Activated B cell treated with CpG ODN at 0.5 μM for 24 hours (primary cell): ENCODE measurements at regions of chr18 and their contacts with region 1.

Region 1: DNA sequence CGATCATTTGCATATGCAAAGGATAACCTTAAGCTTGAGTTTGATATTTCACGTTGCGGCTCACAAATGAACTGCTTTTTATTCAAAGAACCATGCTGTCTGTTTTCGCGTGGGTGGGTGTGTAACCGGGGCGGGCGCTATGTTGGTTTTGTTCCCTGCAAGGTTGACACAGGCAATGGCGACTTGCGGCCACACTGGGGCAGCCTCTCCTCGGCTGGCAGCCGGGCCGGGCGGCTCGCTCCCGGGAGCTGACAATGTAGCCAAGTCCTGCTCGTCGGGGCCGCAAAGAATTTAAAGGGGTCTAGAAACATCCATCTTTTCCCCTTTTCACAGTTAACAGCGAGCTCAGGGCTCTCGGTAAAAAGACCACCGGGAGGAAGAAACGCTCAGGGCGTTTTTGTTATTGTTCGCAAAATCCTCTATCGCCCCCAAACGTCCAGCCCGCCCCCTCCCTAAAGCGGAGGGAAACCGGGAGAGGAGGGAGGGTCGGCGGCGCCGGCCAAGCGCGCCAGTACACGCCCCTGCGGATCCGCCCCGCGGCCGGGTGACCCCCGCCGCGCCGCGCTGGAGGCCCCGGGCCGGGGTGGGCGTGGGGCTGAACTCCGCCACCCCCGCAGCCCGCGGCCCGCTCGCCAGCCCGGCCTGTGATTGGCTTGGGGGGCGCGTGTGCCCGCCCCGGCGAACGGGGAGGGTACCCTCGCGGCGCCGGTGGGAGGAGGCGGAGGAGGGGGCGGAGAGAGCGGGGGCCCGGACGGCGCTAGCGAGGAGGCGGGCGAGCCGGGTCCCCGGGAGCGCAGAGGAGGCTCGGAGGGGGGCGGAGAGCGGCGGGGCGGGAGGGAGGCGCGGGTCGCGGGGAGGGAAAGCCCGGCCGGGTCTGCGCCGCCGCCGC is at the start of gene NEDD4L:
- DNase-seq: peak; percentile 83
- ATAC-seq: peak; percentile 85
- H3K4me3 Mint-ChIP-seq: peak within 1 kb of the TSS; percentile 93
- H3K27ac Mint-ChIP-seq: peak within 1 kb of the TSS; percentile 82
- H3K4me1 Mint-ChIP-seq: peaks cover 41% of the 10 kb centered on the region
- H3K27me3 Mint-ChIP-seq: no peaks in the 10 kb centered on the region
- CTCF ChIP-seq: no peak
- total RNA-seq, gene NEDD4L: 24.9 and 32.6 TPM in 2 replicates

Region 2: DNA sequence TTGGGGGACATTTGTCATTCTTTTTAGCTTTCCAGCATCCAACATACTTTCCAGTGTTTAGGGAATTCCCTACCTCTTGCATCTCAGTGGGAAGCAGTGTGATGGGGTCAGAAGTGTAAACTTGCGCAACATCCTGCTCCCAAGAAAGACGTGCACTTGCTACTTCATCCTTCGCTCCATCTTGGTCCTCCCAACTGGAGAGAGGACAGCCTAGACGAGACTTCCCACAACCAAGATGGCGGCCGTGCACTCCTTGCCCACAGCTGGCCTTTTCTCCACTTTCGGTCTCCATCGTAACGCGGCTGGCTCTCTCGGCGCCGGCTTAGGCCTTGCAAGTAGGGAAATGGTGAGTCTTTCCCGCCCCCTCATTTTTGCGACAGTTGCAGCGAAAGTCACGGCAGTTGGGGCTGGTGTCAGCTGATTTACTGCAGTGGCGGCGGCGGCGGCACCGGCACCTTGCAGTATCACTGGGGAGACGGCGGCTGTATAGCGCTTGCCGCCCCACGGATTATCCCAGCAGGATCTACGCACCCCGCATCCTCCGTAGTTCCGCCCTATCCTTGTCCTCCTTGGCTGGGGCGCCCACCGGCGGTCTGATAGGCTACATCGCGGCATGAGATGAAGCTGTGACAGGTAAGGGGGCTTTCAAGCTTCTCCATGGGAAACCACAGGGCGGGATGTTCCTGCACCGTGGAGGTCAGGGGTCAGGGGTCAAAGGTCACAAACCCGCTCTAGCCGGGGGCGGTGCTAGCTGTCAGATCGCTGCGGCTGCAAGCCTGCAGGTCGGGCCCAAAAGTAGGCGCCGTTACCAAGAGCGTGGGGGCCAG is 1392.6 kb before region 1 on chr18 and contains the start of gene WDR7:
- CTCF ChIA-PET with region 1: no interaction called
- POLR2A ChIA-PET with region 1: no interaction called
- intact Hi-C with region 1: loop called (anchors 10 kb)
- DNase-seq: peak; percentile 81
- ATAC-seq: peak; percentile 93
- H3K4me3 Mint-ChIP-seq: peak within 1 kb of the TSS; percentile 92
- H3K27ac Mint-ChIP-seq: peak within 1 kb of the TSS; percentile 92
- H3K4me1 Mint-ChIP-seq: peaks cover 36% of the 10 kb centered on the region
- H3K27me3 Mint-ChIP-seq: no peaks in the 10 kb centered on the region
- CTCF ChIP-seq: no peak
- total RNA-seq, gene WDR7: 26.0 and 33.4 TPM in 2 replicates

Region 3: DNA sequence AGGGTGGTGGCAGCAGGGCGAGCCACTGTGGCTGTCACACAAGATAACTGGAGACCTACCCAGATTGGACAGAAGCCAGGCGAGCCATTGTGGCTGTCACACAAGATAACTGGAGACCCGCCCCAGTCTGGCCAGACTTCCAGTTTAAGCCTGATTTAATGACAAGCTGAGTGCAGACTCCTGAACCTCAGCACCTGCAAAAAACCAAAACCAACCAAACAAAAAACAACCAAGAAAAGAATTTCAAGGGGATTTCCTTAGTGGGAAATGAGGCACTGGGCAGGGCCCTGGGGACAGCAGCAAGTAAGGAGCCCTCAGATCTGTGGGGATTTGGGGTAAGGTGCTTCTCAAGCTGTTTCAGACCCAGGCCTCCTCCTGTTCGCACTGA is 992.1 kb before region 1 on chr18:
- CTCF ChIA-PET with region 1: no interaction called
- POLR2A ChIA-PET with region 1: no interaction called
- intact Hi-C with region 1: no loop called
- DNase-seq: no peak
- ATAC-seq: peak; percentile 37
- H3K4me3 Mint-ChIP-seq: no peak overlapping the region
- H3K27ac Mint-ChIP-seq: no peak overlapping the region
- H3K4me1 Mint-ChIP-seq: no peaks in the 10 kb centered on the region
- H3K27me3 Mint-ChIP-seq: peaks cover 48% of the 10 kb centered on the region
- CTCF ChIP-seq: no peak

Region 4: DNA sequence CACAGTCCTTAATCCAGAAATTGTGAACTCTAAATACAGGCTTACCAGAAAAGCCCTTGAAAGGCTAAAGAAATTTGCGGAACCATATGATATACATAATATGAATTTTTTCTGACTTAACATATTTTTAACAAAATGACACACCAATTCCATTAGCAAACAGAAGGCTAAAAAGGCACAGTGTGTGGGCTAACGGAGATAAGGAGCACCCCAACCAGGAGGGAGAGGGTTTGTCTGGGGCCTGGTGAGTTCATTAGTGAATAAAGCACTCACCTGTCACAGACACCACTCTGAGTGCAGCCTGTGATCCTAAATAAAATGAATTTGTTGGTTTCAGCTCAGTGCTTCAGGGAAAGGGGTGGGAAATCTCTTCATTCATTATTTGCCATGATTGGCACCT is 454.6 kb before region 1 on chr18:
- CTCF ChIA-PET with region 1: no interaction called
- POLR2A ChIA-PET with region 1: no interaction called
- intact Hi-C with region 1: no loop called
- DNase-seq: no peak
- ATAC-seq: no peak
- H3K4me3 Mint-ChIP-seq: no peak overlapping the region
- H3K27ac Mint-ChIP-seq: no peak overlapping the region
- H3K4me1 Mint-ChIP-seq: peaks cover 14% of the 10 kb centered on the region
- H3K27me3 Mint-ChIP-seq: no peaks in the 10 kb centered on the region
- CTCF ChIP-seq: no peak

Region 5: GRCh38 chr18:57881818-57882413 is 161.8 kb before region 1 on chr18:
- CTCF ChIA-PET with region 1: interaction called, 12 read pairs
- POLR2A ChIA-PET with region 1: interaction called, 3 read pairs
- intact Hi-C with region 1: loop called (anchors 1 kb)
- DNase-seq: peak; percentile 37
- ATAC-seq: peak; percentile 99
- H3K4me3 Mint-ChIP-seq: no peak overlapping the region
- H3K27ac Mint-ChIP-seq: no peak overlapping the region
- H3K4me1 Mint-ChIP-seq: peaks cover 8% of the 10 kb centered on the region
- H3K27me3 Mint-ChIP-seq: no peaks in the 10 kb centered on the region
- CTCF ChIP-seq: peak; percentile 79

Region 6: GRCh38 chr18:58091099-58091611 is 47.4 kb after region 1 on chr18:
- CTCF ChIA-PET with region 1: no interaction called
- POLR2A ChIA-PET with region 1: interaction called, 5 read pairs
- intact Hi-C with region 1: loop called (anchors 1 kb)
- DNase-seq: peak; percentile 22
- ATAC-seq: peak; percentile 99
- H3K4me3 Mint-ChIP-seq: peak overlapping the region; percentile 21
- H3K27ac Mint-ChIP-seq: peak overlapping the region; percentile 87
- H3K4me1 Mint-ChIP-seq: peaks cover 21% of the 10 kb centered on the region
- H3K27me3 Mint-ChIP-seq: no peaks in the 10 kb centered on the region
- CTCF ChIP-seq: no peak

Region 7: DNA sequence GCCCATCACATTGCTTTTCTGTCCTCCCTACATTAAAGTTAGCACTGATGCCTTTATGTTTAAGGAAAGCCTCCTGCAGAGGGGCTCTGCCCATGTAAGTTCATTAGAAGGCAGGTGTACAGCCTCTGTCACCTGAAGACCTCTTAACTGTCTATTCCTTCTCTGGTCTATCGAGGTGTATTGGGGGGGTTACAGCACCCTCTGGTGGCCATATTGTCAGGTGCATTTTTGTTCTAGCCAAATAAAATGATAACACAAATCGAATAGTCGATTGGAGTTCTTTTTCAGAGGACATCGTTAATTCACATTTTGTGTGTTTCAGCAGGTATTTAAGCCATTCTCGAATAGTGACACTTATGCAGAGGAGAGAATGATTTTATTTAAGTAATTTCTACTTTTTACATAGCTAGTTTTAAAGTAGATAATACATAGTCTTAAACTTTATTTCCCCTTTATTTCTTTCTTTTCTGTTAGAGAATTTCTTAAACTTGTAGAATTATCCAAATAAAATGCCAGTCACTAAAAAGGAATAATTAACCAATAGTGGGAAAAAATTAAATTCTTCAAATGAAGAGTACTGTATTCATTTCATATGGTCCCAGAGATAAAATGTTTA is 137.1 kb after region 1 on chr18:
- CTCF ChIA-PET with region 1: interaction called, 6 read pairs
- POLR2A ChIA-PET with region 1: no interaction called
- intact Hi-C with region 1: loop called (anchors 1 kb)
- DNase-seq: peak; percentile 31
- ATAC-seq: peak; percentile 61
- H3K4me3 Mint-ChIP-seq: no peak overlapping the region
- H3K27ac Mint-ChIP-seq: no peak overlapping the region
- H3K4me1 Mint-ChIP-seq: peaks cover 4% of the 10 kb centered on the region
- H3K27me3 Mint-ChIP-seq: no peaks in the 10 kb centered on the region
- CTCF ChIP-seq: peak; percentile 63

Region 8: DNA sequence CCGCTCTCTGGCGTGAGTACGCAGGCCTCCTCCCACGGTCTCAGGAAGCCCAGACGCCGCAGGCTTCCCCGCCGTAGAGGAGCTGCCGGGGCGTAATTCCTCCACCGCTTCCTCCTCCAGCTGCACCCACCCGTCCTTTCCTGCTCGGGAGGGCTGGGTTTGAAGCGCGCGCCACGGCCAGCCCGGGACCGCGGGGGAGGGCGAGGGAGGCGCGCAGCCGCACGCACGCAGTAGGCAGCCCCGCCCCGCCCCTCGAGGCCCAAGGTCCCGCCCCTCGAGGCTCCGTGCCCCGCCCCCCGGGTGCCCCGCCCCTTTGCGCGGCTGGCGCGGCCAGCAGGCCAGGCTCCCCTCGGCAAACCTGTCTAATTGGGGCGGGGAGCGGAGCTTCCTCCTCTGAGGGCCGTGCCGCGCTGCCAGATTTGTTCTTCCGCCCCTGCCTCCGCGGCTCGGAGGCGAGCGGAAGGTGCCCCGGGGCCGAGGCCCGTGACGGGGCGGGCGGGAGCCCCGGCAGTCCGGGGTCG is 627.4 kb after region 1 on chr18 and contains the start of gene MALT1:
- CTCF ChIA-PET with region 1: no interaction called
- POLR2A ChIA-PET with region 1: no interaction called
- intact Hi-C with region 1: loop called (anchors 10 kb)
- DNase-seq: peak; percentile 98
- ATAC-seq: peak; percentile 89
- H3K4me3 Mint-ChIP-seq: peak within 1 kb of the TSS; percentile 95
- H3K27ac Mint-ChIP-seq: peak within 1 kb of the TSS; percentile 95
- H3K4me1 Mint-ChIP-seq: peaks cover 74% of the 10 kb centered on the region
- H3K27me3 Mint-ChIP-seq: no peaks in the 10 kb centered on the region
- CTCF ChIP-seq: no peak
- total RNA-seq, gene MALT1: 61.6 and 75.6 TPM in 2 replicates